Prostate gland (tissue), 2 donors: ENCODE measurements at regions of chr7 and their contacts with region 1.

Region 1: DNA sequence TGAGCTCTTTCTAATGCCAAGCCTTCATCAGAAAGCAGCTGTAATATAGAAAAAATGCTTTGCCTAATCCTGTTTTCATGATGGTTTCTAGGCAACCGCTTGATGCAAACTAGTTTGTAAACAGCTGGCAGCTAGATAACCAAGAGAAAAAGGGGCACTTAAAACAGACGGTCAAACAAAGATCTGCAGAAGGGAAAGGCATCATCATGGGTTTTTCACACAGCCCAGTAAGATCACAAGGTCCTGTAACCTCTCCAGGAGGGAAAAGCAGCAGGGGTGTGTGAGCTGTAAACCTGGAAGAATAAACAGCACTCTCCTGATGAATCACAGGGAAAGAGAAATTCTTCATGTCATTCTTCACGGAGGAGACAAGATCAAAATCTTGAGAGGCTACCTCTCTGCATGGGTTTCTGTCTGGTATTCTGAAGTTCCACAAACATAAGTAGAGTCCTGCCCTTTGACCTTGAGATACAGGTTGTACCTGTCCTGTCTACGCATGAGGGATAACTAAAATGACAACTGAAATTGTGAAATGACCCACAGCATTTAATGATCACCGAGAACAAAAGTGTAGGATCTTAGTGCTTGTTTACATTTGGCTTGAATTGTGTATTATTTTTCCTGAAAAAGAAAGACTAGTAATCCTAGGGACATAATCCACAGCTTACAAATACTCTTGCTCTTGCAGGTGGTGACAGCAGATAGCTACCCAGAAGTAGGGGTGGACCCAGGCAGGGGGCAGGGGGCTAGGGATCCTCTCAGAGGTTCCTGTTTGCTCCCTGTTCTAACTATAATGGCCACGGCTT is 48.0 kb downstream of the CREB3L2 start:
- DNase-seq: no peak
- H3K4me3 ChIP-seq: no peak overlapping the region
- H3K27ac ChIP-seq: peak overlapping the region; percentile 20 to 56
- H3K4me1 ChIP-seq: peaks cover 23% of the 10 kb centered on the region
- H3K27me3 ChIP-seq: no peaks in the 10 kb centered on the region
- CTCF ChIP-seq: no peak
- POLR2A ChIP-seq: no peak

Region 2: DNA sequence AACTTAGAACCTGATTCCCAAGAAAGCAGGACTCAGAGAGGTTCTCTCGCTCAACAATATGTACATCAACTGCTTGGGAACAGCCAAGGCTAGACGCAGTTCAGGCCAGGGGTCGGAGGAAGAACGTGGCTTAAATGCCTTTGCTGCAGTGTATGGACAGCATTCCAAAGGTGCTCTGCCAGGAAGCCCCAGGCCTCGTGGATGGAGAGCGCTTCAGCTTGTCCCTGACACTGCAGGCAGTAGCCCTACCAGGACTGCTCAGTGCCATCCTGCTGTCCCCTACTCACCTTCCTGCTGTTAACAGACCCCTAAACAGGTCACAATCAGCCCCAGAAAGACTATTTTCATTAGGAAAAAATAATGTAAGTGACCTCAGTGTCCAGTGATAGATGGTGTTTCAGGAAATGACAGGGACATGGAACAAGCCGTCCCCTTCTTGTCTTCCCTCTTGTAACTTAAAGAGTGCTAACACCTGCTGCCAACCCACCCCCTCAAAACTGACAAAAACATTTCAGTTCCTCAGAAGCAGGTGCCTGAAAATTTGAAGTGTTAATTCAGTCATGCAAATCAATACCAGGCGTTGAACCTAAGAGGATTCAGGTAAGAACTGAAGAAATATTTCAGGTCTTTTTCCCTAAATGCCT is 31.5 kb after region 1 on chr7:
- intact Hi-C with region 1: loop called (anchors 5 kb)
- DNase-seq: no peak
- H3K4me3 ChIP-seq: no peak overlapping the region
- H3K27ac ChIP-seq: peak overlapping the region in 1 of 2 donors; percentile 44
- H3K4me1 ChIP-seq: peaks cover 25% of the 10 kb centered on the region
- H3K27me3 ChIP-seq: no peaks in the 10 kb centered on the region
- CTCF ChIP-seq: no peak
- POLR2A ChIP-seq: no peak

Region 3: GRCh38 chr7:138001529-138002095 is 47.7 kb after region 1 on chr7 and contains the start of gene CREB3L2:
- intact Hi-C with region 1: loop called (anchors 2 kb)
- DNase-seq: peak; percentile 35
- H3K4me3 ChIP-seq: peak within 1 kb of the TSS; percentile 89 to 91
- H3K27ac ChIP-seq: peak within 1 kb of the TSS; percentile 88 to 91
- H3K4me1 ChIP-seq: no peaks in the 10 kb centered on the region
- H3K27me3 ChIP-seq: no peaks in the 10 kb centered on the region
- CTCF ChIP-seq: no peak
- POLR2A ChIP-seq: peak; percentile 83
- total RNA-seq, gene CREB3L2: 34.1 to 42.0 TPM

Region 4: GRCh38 chr7:138064856-138065357 is 111.0 kb after region 1 on chr7:
- intact Hi-C with region 1: no loop called
- DNase-seq: no peak
- H3K4me3 ChIP-seq: no peak overlapping the region
- H3K27ac ChIP-seq: no peak overlapping the region
- H3K4me1 ChIP-seq: no peaks in the 10 kb centered on the region
- H3K27me3 ChIP-seq: no peaks in the 10 kb centered on the region
- CTCF ChIP-seq: no peak
- POLR2A ChIP-seq: no peak